Heart left ventricle (tissue), 16 donors: ENCODE measurements at regions of chr10 and their contacts with region 1.

Region 1: DNA sequence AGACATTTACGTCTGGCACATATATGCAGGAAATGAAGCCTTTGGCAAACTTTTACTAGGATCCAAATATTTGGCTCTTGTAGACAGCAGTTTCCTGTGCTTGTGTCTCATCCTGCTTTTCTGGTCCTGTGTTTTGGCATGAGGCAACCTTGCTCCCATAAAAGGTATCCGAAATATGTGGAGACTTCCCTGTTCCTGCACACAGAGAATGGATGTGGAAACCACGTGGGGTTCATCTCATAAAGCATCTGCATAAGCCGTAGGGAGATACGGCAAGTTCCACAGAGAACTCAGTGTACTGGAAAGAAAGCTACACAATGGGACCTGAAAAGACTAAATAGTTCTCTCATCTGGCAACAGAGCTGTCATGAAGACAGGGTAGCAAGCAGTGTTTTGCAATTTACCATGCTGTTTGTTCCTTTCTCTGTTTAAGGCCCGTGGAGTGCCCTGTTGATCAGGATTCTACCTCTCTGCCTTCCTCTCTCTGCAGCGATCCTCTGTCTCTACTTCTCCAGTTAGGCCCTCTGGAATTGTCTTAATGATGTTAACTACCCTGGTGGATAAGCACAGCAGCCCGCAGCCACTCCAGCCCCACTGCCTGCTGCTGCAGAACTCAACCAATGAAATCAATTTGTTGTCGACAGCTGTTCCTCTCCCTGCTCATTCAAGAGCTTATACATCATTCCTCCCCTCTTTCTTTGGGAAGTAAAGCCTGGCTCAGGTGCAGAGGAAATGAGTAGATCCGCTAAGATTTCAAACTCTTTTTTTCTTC is 293.6 kb downstream of the CSTF2T start:
- DNase-seq: no peak
- ATAC-seq: peak; percentile 45 to 84 (median 62)
- H3K4me3 ChIP-seq: no peak overlapping the region
- H3K27ac ChIP-seq: peak overlapping the region in 11 of 12 donors; percentile 13 to 60 (median 38)
- H3K4me1 ChIP-seq: peaks cover 0 to 41% (median 26%) of the 10 kb centered on the region in 12 donors
- H3K27me3 ChIP-seq: no peaks in the 10 kb centered on the region
- CTCF ChIP-seq: no peak
- POLR2A ChIP-seq: no peak

Region 2: DNA sequence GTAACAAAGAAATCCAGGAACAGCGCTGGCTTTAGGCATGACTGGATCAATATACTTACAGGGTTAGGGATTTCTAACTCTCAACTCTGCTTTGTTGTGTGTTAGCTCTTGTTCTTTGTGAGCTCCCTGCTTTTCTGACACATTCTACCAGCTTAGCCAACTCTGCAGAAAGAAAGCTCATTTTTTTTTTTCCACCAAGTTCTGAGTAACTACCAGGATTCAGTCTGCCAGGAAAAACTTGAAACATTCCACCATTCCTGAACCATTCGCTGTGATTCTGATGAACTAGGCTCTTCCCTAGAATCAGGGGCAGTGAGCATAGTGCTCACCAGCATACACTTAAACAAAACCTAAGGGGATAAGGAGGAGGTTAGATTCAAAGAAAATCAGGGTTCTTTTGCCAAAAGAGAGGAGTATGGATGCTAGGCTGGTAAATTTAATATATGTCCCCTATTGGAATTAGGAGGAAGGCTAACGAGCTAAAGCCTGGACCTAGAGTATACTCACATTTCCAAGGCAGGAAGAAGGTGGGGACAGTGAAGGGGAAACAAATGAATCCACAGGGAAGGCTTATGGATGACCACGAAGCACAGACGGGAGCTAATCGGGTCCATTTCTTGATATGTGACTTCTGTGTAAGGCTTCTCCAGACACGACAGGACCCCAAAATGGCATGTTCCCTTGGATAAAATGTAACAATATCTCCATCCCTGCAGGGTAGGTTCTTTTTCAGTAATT is 148.1 kb before region 1 on chr10:
- intact Hi-C with region 1: loop called in 1 of 10 experiments (anchors 10 kb)
- DNase-seq: no peak
- ATAC-seq: peak in 1 of 4 donors; percentile 36
- H3K4me3 ChIP-seq: no peak overlapping the region
- H3K27ac ChIP-seq: no peak overlapping the region
- H3K4me1 ChIP-seq: peaks cover 0 to 4% (median 0%) of the 10 kb centered on the region in 12 donors
- H3K27me3 ChIP-seq: no peaks in the 10 kb centered on the region
- CTCF ChIP-seq: no peak
- POLR2A ChIP-seq: no peak